Upper lobe of right lung (tissue), 1 donor: ENCODE measurements at regions of chr12 and their contacts with region 1.

Region 1: DNA sequence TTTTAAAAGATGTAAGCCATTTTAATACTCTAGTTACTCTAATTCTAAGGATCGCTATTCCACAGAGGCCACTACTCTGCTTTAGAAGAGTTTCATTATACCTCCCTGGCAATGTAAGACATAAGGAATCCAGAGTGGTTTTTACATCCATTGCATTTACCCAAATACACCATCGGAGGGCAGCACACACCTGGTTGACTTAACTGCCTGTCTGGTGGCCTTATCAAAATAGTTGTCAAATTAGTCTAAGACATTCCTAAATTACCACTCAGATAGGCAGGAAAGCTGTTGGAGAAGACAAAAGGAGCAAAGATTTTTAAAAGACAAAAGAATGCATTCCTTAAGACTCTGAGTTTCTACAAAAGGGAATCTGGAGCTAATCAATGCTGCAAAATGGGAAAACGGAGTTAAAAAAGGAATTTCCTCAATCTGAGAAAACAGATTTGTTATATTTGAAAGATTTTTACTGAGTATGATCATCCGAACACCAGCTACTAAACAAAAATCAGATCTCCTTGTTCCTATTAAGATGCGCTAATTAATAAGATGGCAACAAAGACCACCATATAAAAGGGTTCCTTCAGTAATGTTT is 33.8 kb upstream of the FGD4 start:
- DNase-seq: no peak
- ATAC-seq: peak; percentile 97
- H3K4me3 ChIP-seq: no peak overlapping the region
- H3K27ac ChIP-seq: no peak overlapping the region
- H3K4me1 ChIP-seq: no peaks in the 10 kb centered on the region
- H3K27me3 ChIP-seq: no peaks in the 10 kb centered on the region
- CTCF ChIP-seq: peak; percentile 81

Region 2: DNA sequence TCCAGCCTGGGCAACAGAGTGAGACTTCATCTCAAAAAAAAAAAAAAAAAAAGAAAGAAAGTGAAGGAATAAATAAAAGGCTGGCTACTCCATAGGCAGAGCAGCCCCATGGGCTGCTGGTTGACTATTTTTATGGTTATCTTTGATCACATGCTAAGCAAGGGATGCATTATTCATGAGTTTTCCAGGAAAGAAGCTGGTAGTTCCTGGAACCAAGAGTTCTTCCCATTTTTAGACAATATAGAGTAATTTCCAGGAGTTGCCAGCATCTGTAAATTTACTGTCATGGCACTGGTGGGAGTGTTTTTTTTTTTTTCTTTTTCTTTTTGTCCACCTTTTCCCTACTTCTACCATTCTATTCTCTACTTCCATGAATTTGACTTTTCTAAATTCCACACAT is 58.0 kb after region 1 on chr12:
- intact Hi-C with region 1: no loop called
- DNase-seq: no peak
- ATAC-seq: no peak
- H3K4me3 ChIP-seq: no peak overlapping the region
- H3K27ac ChIP-seq: no peak overlapping the region
- H3K4me1 ChIP-seq: peaks cover 21% of the 10 kb centered on the region
- H3K27me3 ChIP-seq: no peaks in the 10 kb centered on the region
- CTCF ChIP-seq: no peak

Region 3: DNA sequence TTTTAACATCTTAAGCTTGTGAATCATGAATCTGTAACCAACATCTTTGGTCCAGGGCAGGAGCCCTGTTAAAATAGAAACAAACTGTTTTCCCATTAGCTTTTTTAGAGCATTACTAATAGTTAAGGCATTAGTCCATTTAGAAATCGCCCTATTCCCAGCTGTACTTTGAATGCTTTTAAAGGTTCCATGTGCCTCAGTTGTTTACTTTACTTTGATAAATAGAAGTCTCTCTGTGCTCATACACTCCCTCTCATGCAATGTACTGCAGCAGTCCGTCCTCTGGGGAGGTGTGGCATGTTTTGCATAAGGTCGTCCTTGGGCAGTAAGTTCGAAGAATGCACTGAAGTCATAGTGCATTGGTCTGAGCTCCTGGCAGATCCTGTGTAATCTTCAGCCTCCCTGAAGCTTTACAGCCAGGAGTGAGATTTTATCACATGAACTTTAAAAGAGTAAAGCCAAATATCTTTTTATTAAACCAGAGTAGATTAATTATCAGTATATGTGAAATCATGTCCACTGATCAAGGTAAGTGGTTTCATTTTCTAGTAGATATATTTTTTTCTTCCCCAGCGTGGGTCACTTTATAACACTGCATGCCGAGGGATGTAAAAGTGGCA is 168.5 kb after region 1 on chr12:
- intact Hi-C with region 1: no loop called
- DNase-seq: no peak
- ATAC-seq: peak; percentile 94
- H3K4me3 ChIP-seq: peak overlapping the region; percentile 54
- H3K27ac ChIP-seq: peak overlapping the region; percentile 80
- H3K4me1 ChIP-seq: peaks cover 44% of the 10 kb centered on the region
- H3K27me3 ChIP-seq: no peaks in the 10 kb centered on the region
- CTCF ChIP-seq: no peak

Region 4: GRCh38 chr12:32679091-32679919 is 313.7 kb after region 1 on chr12 and contains the start of gene DNM1L:
- intact Hi-C with region 1: loop called (anchors 10 kb)
- DNase-seq: peak; percentile 97
- ATAC-seq: peak; percentile 99
- H3K4me3 ChIP-seq: peak within 1 kb of the TSS; percentile 77
- H3K27ac ChIP-seq: peak within 1 kb of the TSS; percentile 90
- H3K4me1 ChIP-seq: peaks cover 11% of the 10 kb centered on the region
- H3K27me3 ChIP-seq: no peaks in the 10 kb centered on the region
- CTCF ChIP-seq: no peak
- total RNA-seq, gene DNM1L: 48.5 TPM